Aorta (tissue), 5 donors: ENCODE measurements at regions of chr11 and their contacts with region 1.

Region 1: DNA sequence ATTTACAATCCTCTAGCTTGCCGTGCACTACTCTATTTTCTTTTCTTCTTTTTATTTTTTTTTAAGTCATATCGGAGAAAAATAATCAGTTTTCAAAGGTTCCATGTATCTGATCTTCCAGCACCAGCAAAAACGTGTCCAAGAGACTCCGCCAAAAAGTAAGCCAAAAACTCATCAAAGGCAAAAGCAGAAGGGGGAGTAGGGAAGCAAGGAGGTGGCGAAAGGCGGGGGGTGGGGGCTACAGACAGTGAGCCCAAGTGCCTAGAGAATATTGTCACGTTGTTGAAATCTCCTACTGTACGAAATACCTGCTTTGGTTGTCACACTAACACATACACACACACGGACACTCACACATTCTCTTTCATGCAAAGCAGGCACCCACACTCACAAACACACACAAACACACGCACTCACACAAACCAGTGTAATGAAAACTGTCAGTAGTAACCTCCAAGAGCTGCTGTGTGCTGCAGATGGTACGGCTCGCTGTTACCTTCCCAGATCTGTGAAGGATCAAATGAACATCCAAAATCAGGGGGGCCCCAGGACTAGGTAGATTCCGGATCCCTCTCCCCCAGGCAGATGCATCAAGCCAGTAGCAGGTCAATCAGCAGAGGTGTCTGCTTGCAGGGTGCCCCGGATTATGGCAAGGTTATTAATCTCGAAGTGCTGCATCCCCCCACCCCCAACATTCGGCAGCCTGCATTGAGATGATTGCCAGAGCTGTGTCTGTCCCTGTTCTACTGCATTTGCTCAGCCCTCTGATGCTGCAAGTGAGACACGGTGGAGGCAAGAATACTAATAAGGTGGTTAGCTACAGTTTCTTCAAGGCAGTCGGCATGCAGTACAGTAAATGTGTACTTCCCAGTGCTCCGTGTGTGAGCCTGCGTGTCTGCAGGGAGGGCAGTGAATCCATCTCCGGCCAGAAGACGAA is at the start of gene LRRC4C:
- DNase-seq: no peak
- ATAC-seq: peak; percentile 33
- H3K4me3 ChIP-seq: no peak within 1 kb of the TSS
- H3K27ac ChIP-seq: no peak within 1 kb of the TSS
- H3K4me1 ChIP-seq: no peaks in the 10 kb centered on the region
- H3K27me3 ChIP-seq: no peaks in the 10 kb centered on the region
- total RNA-seq, gene LRRC4C: 0.91 to 1.9 TPM

Region 2: DNA sequence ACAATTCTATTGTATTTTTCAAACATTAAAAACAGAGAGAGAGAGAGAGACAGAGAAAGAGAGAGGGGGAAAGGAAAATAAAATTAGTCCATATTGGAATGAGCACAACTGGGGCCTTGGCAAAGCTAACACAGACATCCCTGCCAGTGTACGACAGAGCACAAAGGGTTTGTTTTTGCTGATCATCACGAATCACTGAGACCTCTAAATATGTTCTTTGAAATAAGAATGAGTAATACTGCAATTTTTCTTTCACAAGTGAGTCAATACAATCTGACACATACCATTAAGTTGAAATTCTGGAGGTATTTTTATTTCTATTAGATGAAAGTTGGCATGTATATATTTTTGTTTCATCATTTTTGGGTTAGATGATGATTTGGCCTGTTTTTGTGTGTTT is 26.7 kb after region 1 on chr11:
- intact Hi-C with region 1: no loop called
- DNase-seq: no peak
- ATAC-seq: no peak
- H3K4me3 ChIP-seq: no peak overlapping the region
- H3K27ac ChIP-seq: no peak overlapping the region
- H3K4me1 ChIP-seq: no peaks in the 10 kb centered on the region
- H3K27me3 ChIP-seq: no peaks in the 10 kb centered on the region

Region 3: GRCh38 chr11:42524534-42525227 is 1064.9 kb after region 1 on chr11:
- intact Hi-C with region 1: loop called in 1 of 2 experiments (anchors 10 kb)
- DNase-seq: no peak
- ATAC-seq: peak; percentile 79
- H3K4me3 ChIP-seq: no peak overlapping the region
- H3K27ac ChIP-seq: no peak overlapping the region
- H3K4me1 ChIP-seq: no peaks in the 10 kb centered on the region
- H3K27me3 ChIP-seq: no peaks in the 10 kb centered on the region